CD4-positive, alpha-beta T cell (primary cell): ENCODE measurements at regions of chr6 and their contacts with region 1.

Region 1: GRCh38 chr6:157379656-157380454 is 1.1 kb upstream of the ZDHHC14 start:
- DNase-seq: peak; percentile 75 to 93 (median 82)
- ATAC-seq: peak; percentile 78
- H3K4me3 ChIP-seq: peak overlapping the region; percentile 95
- H3K4me3 Mint-ChIP-seq: peak overlapping the region; percentile 82
- H3K27ac ChIP-seq: peak overlapping the region; percentile 73 to 75
- H3K27ac Mint-ChIP-seq: peak overlapping the region; percentile 51
- H3K4me1 ChIP-seq: peaks cover 15% of the 10 kb centered on the region
- H3K4me1 Mint-ChIP-seq: peaks cover 13% of the 10 kb centered on the region
- H3K27me3 ChIP-seq: no peaks in the 10 kb centered on the region
- H3K27me3 Mint-ChIP-seq: no peaks in the 10 kb centered on the region
- CTCF ChIP-seq: no peak

Region 2: GRCh38 chr6:156686995-156687788 is 692.7 kb before region 1 on chr6:
- CTCF ChIA-PET with region 1: no interaction called
- POLR2A ChIA-PET with region 1: no interaction called
- intact Hi-C with region 1: loop called in 1 of 2 experiments (anchors 10 kb)
- DNase-seq: peak; percentile 53 to 94 (median 76)
- ATAC-seq: peak; percentile 76
- H3K4me3 ChIP-seq: peak overlapping the region; percentile 82
- H3K4me3 Mint-ChIP-seq: peak overlapping the region; percentile 92
- H3K27ac ChIP-seq: peak overlapping the region; percentile 91 to 97
- H3K27ac Mint-ChIP-seq: peak overlapping the region; percentile 92
- H3K4me1 ChIP-seq: peaks cover 14% of the 10 kb centered on the region
- H3K4me1 Mint-ChIP-seq: peaks cover 24% of the 10 kb centered on the region
- H3K27me3 ChIP-seq: no peaks in the 10 kb centered on the region
- H3K27me3 Mint-ChIP-seq: no peaks in the 10 kb centered on the region
- CTCF ChIP-seq: no peak

Region 3: GRCh38 chr6:157274471-157275226 is 105.2 kb before region 1 on chr6:
- CTCF ChIA-PET with region 1: no interaction called
- POLR2A ChIA-PET with region 1: no interaction called
- intact Hi-C with region 1: loop called in 1 of 2 experiments (anchors 2 kb)
- DNase-seq: peak; percentile 67 to 94 (median 78)
- ATAC-seq: peak; percentile 83
- H3K4me3 ChIP-seq: peak overlapping the region; percentile 74
- H3K4me3 Mint-ChIP-seq: peak overlapping the region; percentile 97
- H3K27ac ChIP-seq: peak overlapping the region; percentile 70 to 79
- H3K27ac Mint-ChIP-seq: peak overlapping the region; percentile 98
- H3K4me1 ChIP-seq: peaks cover 17% of the 10 kb centered on the region
- H3K4me1 Mint-ChIP-seq: peaks cover 13% of the 10 kb centered on the region
- H3K27me3 ChIP-seq: no peaks in the 10 kb centered on the region
- H3K27me3 Mint-ChIP-seq: no peaks in the 10 kb centered on the region
- CTCF ChIP-seq: peak; percentile 56

Region 4: GRCh38 chr6:157323255-157323965 is 56.4 kb before region 1 on chr6 and contains the start of gene TMEM242:
- CTCF ChIA-PET with region 1: no interaction called
- POLR2A ChIA-PET with region 1: interaction called, 38 read pairs
- intact Hi-C with region 1: loop called (anchors 2 kb)
- DNase-seq: peak; percentile 69 to 92 (median 86)
- ATAC-seq: peak; percentile 90
- H3K4me3 ChIP-seq: peak within 1 kb of the TSS; percentile 91
- H3K4me3 Mint-ChIP-seq: peak within 1 kb of the TSS; percentile 90
- H3K27ac ChIP-seq: peak within 1 kb of the TSS; percentile 57 to 77
- H3K27ac Mint-ChIP-seq: peak within 1 kb of the TSS; percentile 74
- H3K4me1 ChIP-seq: peaks cover 17% of the 10 kb centered on the region
- H3K4me1 Mint-ChIP-seq: peaks cover 35% of the 10 kb centered on the region
- H3K27me3 ChIP-seq: peaks cover 0 to 3% of the 10 kb centered on the region in 2 experiments
- H3K27me3 Mint-ChIP-seq: peaks cover 27% of the 10 kb centered on the region
- CTCF ChIP-seq: peak; percentile 17
- total RNA-seq, gene TMEM242: 13.6 to 15.6 TPM

Region 5: GRCh38 chr6:157410045-157410444 is 30.2 kb after region 1 on chr6:
- CTCF ChIA-PET with region 1: no interaction called
- POLR2A ChIA-PET with region 1: no interaction called
- intact Hi-C with region 1: no loop called
- DNase-seq: no peak
- ATAC-seq: no peak
- H3K4me3 ChIP-seq: no peak overlapping the region
- H3K4me3 Mint-ChIP-seq: no peak overlapping the region
- H3K27ac ChIP-seq: no peak overlapping the region
- H3K27ac Mint-ChIP-seq: no peak overlapping the region
- H3K4me1 ChIP-seq: no peaks in the 10 kb centered on the region
- H3K4me1 Mint-ChIP-seq: no peaks in the 10 kb centered on the region
- H3K27me3 ChIP-seq: no peaks in the 10 kb centered on the region
- H3K27me3 Mint-ChIP-seq: no peaks in the 10 kb centered on the region
- CTCF ChIP-seq: no peak

Region 6: DNA sequence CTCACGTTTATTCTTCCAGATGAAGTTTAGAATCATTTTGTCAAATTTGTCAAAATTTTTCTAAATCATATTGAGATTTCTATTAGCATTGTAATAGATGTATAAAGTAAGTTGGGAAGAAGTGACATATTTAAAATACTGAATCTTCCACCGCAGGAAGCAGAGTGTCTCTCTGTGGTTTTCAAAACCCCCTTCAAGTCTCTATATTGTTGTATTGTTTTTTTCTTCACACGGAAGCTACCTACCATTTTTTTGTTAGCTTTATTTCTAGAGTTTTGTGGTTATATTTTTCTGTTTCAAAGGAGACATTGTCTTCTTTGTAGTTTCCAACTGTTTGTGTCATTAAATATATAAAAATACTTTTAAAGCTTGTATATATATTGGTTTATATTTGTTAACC is 189.7 kb after region 1 on chr6:
- CTCF ChIA-PET with region 1: no interaction called
- POLR2A ChIA-PET with region 1: interaction called, 11 read pairs
- intact Hi-C with region 1: no loop called
- DNase-seq: peak in 3 of 14 experiments; percentile 48 to 67 (median 63)
- ATAC-seq: peak; percentile 87
- H3K4me3 ChIP-seq: no peak overlapping the region
- H3K4me3 Mint-ChIP-seq: peak overlapping the region; percentile 14
- H3K27ac ChIP-seq: no peak overlapping the region
- H3K27ac Mint-ChIP-seq: no peak overlapping the region
- H3K4me1 ChIP-seq: peaks cover 6% of the 10 kb centered on the region
- H3K4me1 Mint-ChIP-seq: peaks cover 26% of the 10 kb centered on the region
- H3K27me3 ChIP-seq: no peaks in the 10 kb centered on the region
- H3K27me3 Mint-ChIP-seq: no peaks in the 10 kb centered on the region
- CTCF ChIP-seq: no peak

Region 7: GRCh38 chr6:157981395-157982296 is 601.8 kb after region 1 on chr6 and contains the start of gene SYNJ2:
- CTCF ChIA-PET with region 1: no interaction called
- POLR2A ChIA-PET with region 1: no interaction called
- intact Hi-C with region 1: loop called in 1 of 2 experiments (anchors 2 kb)
- DNase-seq: peak; percentile 71 to 94 (median 83)
- ATAC-seq: peak; percentile 88
- H3K4me3 ChIP-seq: peak within 1 kb of the TSS; percentile 81
- H3K4me3 Mint-ChIP-seq: peak within 1 kb of the TSS; percentile 87
- H3K27ac ChIP-seq: peak within 1 kb of the TSS; percentile 55 to 58
- H3K27ac Mint-ChIP-seq: peak within 1 kb of the TSS; percentile 74
- H3K4me1 ChIP-seq: peaks cover 54% of the 10 kb centered on the region
- H3K4me1 Mint-ChIP-seq: peaks cover 56% of the 10 kb centered on the region
- H3K27me3 ChIP-seq: no peaks in the 10 kb centered on the region
- H3K27me3 Mint-ChIP-seq: no peaks in the 10 kb centered on the region
- CTCF ChIP-seq: peak; percentile 37
- total RNA-seq, gene SYNJ2: 34.6 to 38.0 TPM

Region 8: DNA sequence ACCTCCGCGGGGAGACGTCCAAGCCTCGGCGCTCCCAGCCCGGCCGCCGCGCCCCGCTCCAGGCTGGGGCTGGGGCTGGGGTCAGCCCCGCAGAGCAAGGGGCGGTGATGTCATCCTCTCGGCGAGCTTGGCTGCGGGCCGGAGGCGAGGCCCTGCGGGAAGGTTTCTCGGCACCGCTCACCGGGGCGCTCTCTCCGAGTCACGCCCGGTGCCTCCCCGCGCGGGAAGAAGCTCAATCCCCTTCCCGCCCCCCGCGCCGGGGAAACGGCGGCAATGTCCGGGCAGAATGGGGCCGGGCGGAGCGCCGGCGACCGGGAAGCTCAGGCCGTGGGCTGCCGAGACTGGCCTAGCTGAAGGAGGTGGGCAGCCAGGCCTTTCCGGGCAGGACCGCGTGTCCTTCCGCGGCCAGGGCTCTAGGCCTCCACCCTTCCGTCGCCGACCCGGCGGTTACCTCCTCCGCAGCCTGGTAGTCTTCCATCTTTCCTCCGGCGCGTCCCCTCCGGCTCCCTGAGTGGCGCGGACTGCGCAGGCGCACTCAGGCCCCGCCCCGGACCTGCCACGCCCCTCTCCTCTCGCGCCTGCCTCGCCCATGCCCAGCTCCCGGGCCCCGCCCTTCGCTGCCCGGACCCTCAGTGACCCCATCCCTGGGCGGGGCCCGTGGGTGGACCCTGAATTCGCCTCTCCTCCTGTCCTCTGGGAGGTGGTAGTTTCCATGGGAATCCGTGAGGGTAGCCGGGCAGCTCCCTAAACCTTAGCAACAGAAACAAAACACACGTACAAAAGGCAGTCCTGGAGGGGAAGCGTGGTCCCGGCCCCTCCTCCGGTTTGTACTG is 1264.6 kb after region 1 on chr6 and contains the start of gene DYNLT1:
- CTCF ChIA-PET with region 1: no interaction called
- POLR2A ChIA-PET with region 1: no interaction called
- intact Hi-C with region 1: loop called in 1 of 2 experiments (anchors 10 kb)
- DNase-seq: peak; percentile 73 to 92 (median 84)
- ATAC-seq: peak; percentile 63
- H3K4me3 ChIP-seq: peak within 1 kb of the TSS; percentile 82
- H3K4me3 Mint-ChIP-seq: peak within 1 kb of the TSS; percentile 100
- H3K27ac ChIP-seq: peak within 1 kb of the TSS; percentile 85 to 93
- H3K27ac Mint-ChIP-seq: peak within 1 kb of the TSS; percentile 97
- H3K4me1 ChIP-seq: peaks cover 53% of the 10 kb centered on the region
- H3K4me1 Mint-ChIP-seq: peaks cover 67% of the 10 kb centered on the region
- H3K27me3 ChIP-seq: no peaks in the 10 kb centered on the region
- H3K27me3 Mint-ChIP-seq: no peaks in the 10 kb centered on the region
- CTCF ChIP-seq: no peak
- total RNA-seq, gene DYNLT1: 170 to 182 TPM